Activated T-helper 1 cell treated with anti-CD3 and anti-CD28 coated beads, Interleukin-12 subunit alpha, Interleukin-12 subunit beta, Interleukin-2, Interleukin-4 antibody, amounts not matched to agents 30 ng/mL and 10 ng/mL and 1 ng/mL, durations not matched to agents 14 hours and 24 hours and 36 hours (primary cell): ENCODE measurements at regions of chr1 and their contacts with region 1.

Region 1: GRCh38 chr1:47424336-47424982 is 8.4 kb downstream of the FOXE3 start:
- DNase-seq: no peak
- H3K4me3 Mint-ChIP-seq: no peak overlapping the region
- H3K27ac Mint-ChIP-seq: no peak overlapping the region
- H3K4me1 Mint-ChIP-seq: no peaks in the 10 kb centered on the region
- H3K27me3 Mint-ChIP-seq: peaks cover 29% of the 10 kb centered on the region

Region 2: GRCh38 chr1:47192458-47193384 is 231.7 kb before region 1 on chr1:
- intact Hi-C with region 1: loop called (anchors 2 kb)
- DNase-seq: peak; percentile 54
- H3K4me3 Mint-ChIP-seq: no peak overlapping the region
- H3K27ac Mint-ChIP-seq: no peak overlapping the region
- H3K4me1 Mint-ChIP-seq: no peaks in the 10 kb centered on the region
- H3K27me3 Mint-ChIP-seq: peaks cover 3% of the 10 kb centered on the region

Region 3: GRCh38 chr1:47388891-47389238 is 35.6 kb before region 1 on chr1:
- intact Hi-C with region 1: loop called (anchors 1 kb)
- DNase-seq: peak; percentile 22
- H3K4me3 Mint-ChIP-seq: no peak overlapping the region
- H3K27ac Mint-ChIP-seq: no peak overlapping the region
- H3K4me1 Mint-ChIP-seq: no peaks in the 10 kb centered on the region
- H3K27me3 Mint-ChIP-seq: peaks cover 22% of the 10 kb centered on the region